MCF 10A (cell line): ENCODE measurements at regions of chr7 and their contacts with region 1.

Region 1: GRCh38 chr7:103065667-103066066 is 8.9 kb downstream of the FBXL13 start:
- DNase-seq: peak; percentile 57
- H3K4me3 Mint-ChIP-seq: no peak overlapping the region
- H3K27ac Mint-ChIP-seq: no peak overlapping the region
- H3K4me1 Mint-ChIP-seq: no peaks in the 10 kb centered on the region
- H3K27me3 Mint-ChIP-seq: no peaks in the 10 kb centered on the region
- CTCF ChIP-seq: peak; percentile 39

Region 2: GRCh38 chr7:102912742-102913141 is 152.9 kb before region 1 on chr7 and contains the start of gene LRRC17:
- CTCF ChIA-PET with region 1: interaction called, 6 read pairs
- POLR2A ChIA-PET with region 1: no interaction called
- intact Hi-C with region 1: loop called (anchors 10 kb)
- DNase-seq: no peak
- H3K4me3 Mint-ChIP-seq: no peak within 1 kb of the TSS
- H3K27ac Mint-ChIP-seq: no peak within 1 kb of the TSS
- H3K4me1 Mint-ChIP-seq: peaks cover 16% of the 10 kb centered on the region
- H3K27me3 Mint-ChIP-seq: no peaks in the 10 kb centered on the region
- CTCF ChIP-seq: no peak
- total RNA-seq, gene LRRC17: 0.21 and 0.83 TPM in 2 replicates

Region 3: DNA sequence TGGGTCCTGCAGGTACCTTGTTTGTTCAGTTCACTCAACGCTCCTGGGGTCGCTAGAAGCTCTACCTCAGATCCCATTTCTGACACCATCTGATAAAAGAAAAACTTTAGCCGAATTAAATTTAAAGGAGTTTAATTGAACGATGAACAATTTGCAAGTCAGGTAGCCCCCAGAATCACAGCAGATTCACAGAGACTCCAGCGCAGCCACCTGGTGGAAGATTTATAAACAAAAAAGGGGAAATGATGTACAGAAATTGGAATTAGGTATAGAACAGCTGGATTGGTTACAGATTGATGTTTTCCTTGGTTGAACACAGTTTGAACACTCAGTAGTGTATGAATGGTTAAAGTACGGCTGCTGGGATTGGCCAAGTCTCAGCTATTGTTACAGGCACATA is 14.1 kb before region 1 on chr7:
- CTCF ChIA-PET with region 1: interaction called, 19 read pairs
- POLR2A ChIA-PET with region 1: no interaction called
- intact Hi-C with region 1: no loop called
- DNase-seq: no peak
- H3K4me3 Mint-ChIP-seq: no peak overlapping the region
- H3K27ac Mint-ChIP-seq: no peak overlapping the region
- H3K4me1 Mint-ChIP-seq: no peaks in the 10 kb centered on the region
- H3K27me3 Mint-ChIP-seq: no peaks in the 10 kb centered on the region
- CTCF ChIP-seq: no peak

Region 4: GRCh38 chr7:103079836-103080235 is 14.2 kb after region 1 on chr7:
- CTCF ChIA-PET with region 1: interaction called, 65 read pairs
- POLR2A ChIA-PET with region 1: interaction called, 10 read pairs
- intact Hi-C with region 1: no loop called
- DNase-seq: no peak
- H3K4me3 Mint-ChIP-seq: no peak overlapping the region
- H3K27ac Mint-ChIP-seq: no peak overlapping the region
- H3K4me1 Mint-ChIP-seq: no peaks in the 10 kb centered on the region
- H3K27me3 Mint-ChIP-seq: no peaks in the 10 kb centered on the region
- CTCF ChIP-seq: no peak